ENCODE measurements at regions of chr1 and their contacts with region 1.

Region 1: GRCh38 chr1:229506633-229507032 is 1.5 kb downstream of the NUP133 start:
- DNase-seq: no peak
- H3K4me3 ChIP-seq: no peak overlapping the region
- H3K4me3 Mint-ChIP-seq: peak overlapping the region; percentile 91
- H3K27ac Mint-ChIP-seq: no peak overlapping the region
- H3K4me1 ChIP-seq: 0 out of 2 replicates have a peak, but pooled peaks cover 8% of the 10 kb centered on the region
- H3K4me1 Mint-ChIP-seq: peaks cover 12% of the 10 kb centered on the region
- H3K27me3 ChIP-seq: no peaks in the 10 kb centered on the region
- H3K27me3 Mint-ChIP-seq: no peaks in the 10 kb centered on the region
- CTCF ChIP-seq: no peak

Region 2: GRCh38 chr1:229440851-229441537 is 65.6 kb before region 1 on chr1:
- CTCF ChIA-PET with region 1: no interaction called
- POLR2A ChIA-PET with region 1: no interaction called
- intact Hi-C with region 1: no loop called
- DNase-seq: no peak
- H3K4me3 ChIP-seq: no peak overlapping the region
- H3K4me3 Mint-ChIP-seq: no peak overlapping the region
- H3K27ac Mint-ChIP-seq: no peak overlapping the region
- H3K4me1 ChIP-seq: no peaks in the 10 kb centered on the region
- H3K4me1 Mint-ChIP-seq: no peaks in the 10 kb centered on the region
- H3K27me3 ChIP-seq: no peaks in the 10 kb centered on the region
- H3K27me3 Mint-ChIP-seq: no peaks in the 10 kb centered on the region
- CTCF ChIP-seq: no peak

Region 3: GRCh38 chr1:229585338-229585737 is 78.7 kb after region 1 on chr1:
- CTCF ChIA-PET with region 1: no interaction called
- POLR2A ChIA-PET with region 1: interaction called, 11 read pairs
- intact Hi-C with region 1: no loop called
- DNase-seq: no peak
- H3K4me3 ChIP-seq: no peak overlapping the region
- H3K4me3 Mint-ChIP-seq: no peak overlapping the region
- H3K27ac Mint-ChIP-seq: no peak overlapping the region
- H3K4me1 ChIP-seq: peaks cover 7% of the 10 kb centered on the region; the same call in 1 of the 2 replicates
- H3K4me1 Mint-ChIP-seq: no peaks in the 10 kb centered on the region
- H3K27me3 ChIP-seq: no peaks in the 10 kb centered on the region
- H3K27me3 Mint-ChIP-seq: no peaks in the 10 kb centered on the region
- CTCF ChIP-seq: no peak

Measured in Caco-2 (cell line).